ENCODE measurements at regions of chr20 and their contacts with region 1.

Region 1: DNA sequence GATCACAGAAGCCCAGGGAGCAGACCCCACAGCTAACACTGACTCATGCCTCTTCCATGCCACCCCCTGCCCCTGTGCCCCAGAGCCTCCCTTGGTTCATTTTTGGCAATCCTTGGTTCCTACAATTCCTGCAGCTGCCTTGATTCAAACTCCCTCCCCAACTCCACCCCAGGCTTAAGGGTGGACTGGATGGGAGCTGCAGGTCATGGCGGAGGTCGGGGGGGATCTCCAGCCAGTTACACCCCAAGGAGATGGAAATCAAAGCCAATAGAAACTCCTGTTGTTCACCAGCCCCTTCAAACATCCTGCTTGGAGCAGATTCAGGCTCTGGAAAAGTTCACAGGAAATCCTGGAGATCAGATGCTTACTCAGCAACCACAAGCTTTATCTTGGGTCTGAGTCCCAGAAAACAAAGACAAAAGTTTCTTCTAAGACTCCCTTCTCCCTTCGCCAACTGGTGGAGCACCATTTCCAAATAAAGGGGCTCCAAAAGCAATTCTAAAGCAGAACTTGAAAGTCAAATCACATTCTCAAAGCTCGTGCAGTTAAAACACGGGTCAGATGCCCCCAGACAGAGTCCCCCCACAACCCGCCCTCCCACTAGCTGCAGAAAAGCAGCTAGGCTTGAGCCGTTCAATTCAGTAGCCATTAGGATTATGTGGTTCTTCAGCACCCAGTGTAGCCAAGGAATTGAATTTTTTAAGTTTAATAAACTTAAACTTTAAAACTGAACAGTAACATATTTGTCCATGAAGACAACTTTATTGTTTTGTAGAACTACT is 149.5 kb downstream of the ANKRD60 start:
- DNase-seq: no peak

Region 2: GRCh38 chr20:57991211-57991881 is 87.6 kb before region 1 on chr20:
- intact Hi-C with region 1: loop called (anchors 10 kb)
- DNase-seq: no peak

Region 3: GRCh38 chr20:58117944-58118343 is 39.0 kb after region 1 on chr20:
- intact Hi-C with region 1: no loop called
- DNase-seq: no peak